Colonic mucosa (tissue), 4 donors: ENCODE measurements at regions of chr4 and their contacts with region 1.

Region 1: DNA sequence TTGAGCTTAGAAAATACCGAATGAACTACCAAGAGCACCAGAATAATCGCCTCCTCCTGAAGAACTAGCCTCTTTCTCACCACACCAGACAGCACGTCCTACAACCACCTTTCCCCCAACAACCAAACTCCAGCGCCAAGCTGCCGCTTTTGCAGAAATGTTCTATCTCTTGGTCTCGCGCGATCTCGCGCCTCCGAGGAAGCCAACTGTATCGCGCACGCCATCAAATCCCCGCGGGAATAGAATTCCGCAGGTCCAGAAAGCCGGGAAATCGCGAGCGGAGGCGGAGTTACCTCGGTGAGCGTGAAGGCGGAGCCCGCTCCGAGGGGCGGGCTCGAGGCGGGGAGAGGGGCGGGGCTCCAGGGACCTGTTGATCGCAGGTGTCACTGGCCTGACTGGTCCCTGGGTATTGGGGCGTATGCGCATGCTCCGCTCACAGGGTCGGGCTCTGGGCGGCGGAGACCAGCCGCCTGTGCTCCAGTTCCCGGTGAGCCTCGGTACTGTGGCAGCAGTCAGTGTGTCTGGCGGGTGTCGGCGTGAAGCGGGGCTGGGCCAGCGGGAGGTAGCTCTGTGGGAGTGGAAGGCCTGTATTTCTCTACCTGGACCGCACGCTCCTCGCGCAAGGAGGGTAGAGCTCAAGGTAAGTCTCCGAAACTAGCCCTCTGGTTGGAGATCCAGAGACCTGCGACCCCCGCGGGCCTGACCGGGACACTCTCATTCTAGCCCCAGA is at the start of gene USP53:
- DNase-seq: peak; percentile 99
- H3K4me3 ChIP-seq: peak within 1 kb of the TSS; percentile 69
- H3K27ac ChIP-seq: peak within 1 kb of the TSS; percentile 100
- H3K4me1 ChIP-seq: no peaks in the 10 kb centered on the region
- H3K27me3 ChIP-seq: no peaks in the 10 kb centered on the region
- CTCF ChIP-seq: no peak
- total RNA-seq, gene USP53: 37.5 to 83.8 TPM

Region 2: GRCh38 chr4:118898684-118899138 is 313.7 kb before region 1 on chr4:
- intact Hi-C with region 1: no loop called
- DNase-seq: no peak
- H3K4me3 ChIP-seq: no peak overlapping the region
- H3K27ac ChIP-seq: no peak overlapping the region
- H3K4me1 ChIP-seq: no peaks in the 10 kb centered on the region
- H3K27me3 ChIP-seq: no peaks in the 10 kb centered on the region
- CTCF ChIP-seq: no peak

Region 3: GRCh38 chr4:119041951-119042560 is 170.3 kb before region 1 on chr4:
- intact Hi-C with region 1: loop called (anchors 5 kb)
- DNase-seq: peak; percentile 80
- H3K4me3 ChIP-seq: no peak overlapping the region
- H3K27ac ChIP-seq: no peak overlapping the region
- H3K4me1 ChIP-seq: no peaks in the 10 kb centered on the region
- H3K27me3 ChIP-seq: no peaks in the 10 kb centered on the region
- CTCF ChIP-seq: peak; percentile 61

Region 4: DNA sequence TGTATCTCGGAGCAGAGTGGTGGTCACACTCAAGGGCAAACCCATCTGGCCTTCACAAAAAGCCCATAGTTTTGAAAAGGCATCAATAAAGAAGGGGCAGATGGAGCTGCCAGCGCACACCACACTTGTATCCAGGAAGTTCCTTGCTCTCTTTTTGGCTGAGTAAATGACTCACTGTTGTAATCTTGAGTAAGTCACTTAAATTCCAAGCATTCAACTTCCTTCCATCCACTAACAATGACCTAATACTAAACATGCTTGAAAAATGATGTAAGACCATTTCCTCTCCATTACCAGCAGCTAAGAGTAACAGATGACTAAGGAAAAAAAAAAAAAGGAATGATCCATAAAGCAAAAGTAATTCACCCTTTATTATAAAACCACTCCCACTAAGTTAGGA is 109.1 kb before region 1 on chr4:
- intact Hi-C with region 1: loop called (anchors 5 kb)
- DNase-seq: peak; percentile 36
- H3K4me3 ChIP-seq: no peak overlapping the region
- H3K27ac ChIP-seq: peak overlapping the region; percentile 71
- H3K4me1 ChIP-seq: no peaks in the 10 kb centered on the region
- H3K27me3 ChIP-seq: no peaks in the 10 kb centered on the region
- CTCF ChIP-seq: no peak

Region 5: DNA sequence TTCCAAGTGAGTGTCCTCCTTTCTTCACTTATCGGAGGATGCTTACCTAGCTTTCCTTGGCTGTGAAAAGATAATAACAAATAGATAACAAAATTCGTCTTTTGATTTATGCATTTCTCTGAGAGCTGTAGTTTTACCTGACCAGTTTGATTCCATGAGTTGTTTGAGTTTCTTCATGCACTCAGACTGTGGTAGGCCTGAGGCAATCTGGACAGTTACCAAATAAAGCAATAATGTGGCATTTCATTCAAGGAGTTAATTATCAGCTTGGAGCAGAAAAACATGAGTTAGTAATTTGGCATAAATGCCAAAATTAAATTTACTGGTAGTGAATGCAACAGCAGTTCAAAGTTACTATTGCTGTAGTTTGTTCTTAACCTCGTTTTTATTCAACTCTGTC is 56.1 kb after region 1 on chr4:
- intact Hi-C with region 1: loop called (anchors 10 kb)
- DNase-seq: no peak
- H3K4me3 ChIP-seq: no peak overlapping the region
- H3K27ac ChIP-seq: no peak overlapping the region
- H3K4me1 ChIP-seq: no peaks in the 10 kb centered on the region
- H3K27me3 ChIP-seq: no peaks in the 10 kb centered on the region
- CTCF ChIP-seq: no peak

Region 6: GRCh38 chr4:119580303-119580702 is 367.9 kb after region 1 on chr4:
- intact Hi-C with region 1: no loop called
- DNase-seq: no peak
- H3K4me3 ChIP-seq: no peak overlapping the region
- H3K27ac ChIP-seq: no peak overlapping the region
- H3K4me1 ChIP-seq: no peaks in the 10 kb centered on the region
- H3K27me3 ChIP-seq: no peaks in the 10 kb centered on the region
- CTCF ChIP-seq: no peak